Panc1 (cell line): ENCODE measurements at regions of chr2 and their contacts with region 1.

Region 1: DNA sequence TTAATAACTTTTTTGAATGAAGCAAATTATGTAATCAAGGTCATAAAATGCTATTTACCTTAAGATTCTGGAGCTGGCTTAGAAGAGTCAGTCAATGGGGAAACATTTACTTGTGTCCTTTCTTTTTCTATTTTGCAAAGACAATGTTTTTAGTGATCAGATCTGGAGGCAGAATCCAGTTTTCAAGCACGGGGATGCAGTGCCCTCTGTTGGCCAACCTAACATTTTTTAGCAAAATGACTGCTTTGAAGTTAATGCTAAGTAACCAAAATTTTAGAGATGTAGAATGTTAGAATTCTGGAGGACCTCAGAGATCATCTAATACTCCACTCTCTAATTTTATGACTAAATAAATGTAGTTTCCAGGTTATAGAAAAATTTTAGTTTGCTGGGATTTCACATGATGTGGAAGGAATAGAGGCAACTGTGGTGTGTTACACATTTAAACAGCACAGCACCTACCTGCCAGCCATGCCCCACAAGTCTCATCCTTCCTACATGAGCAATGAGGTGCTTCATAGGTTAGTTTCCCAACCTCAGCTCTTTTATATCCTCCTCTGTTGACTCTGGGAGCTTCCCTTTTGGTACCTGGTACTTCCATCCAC is 23.6 kb upstream of the SLC9A4 start:
- DNase-seq: peak; percentile 22
- ATAC-seq: no peak
- H3K4me3 ChIP-seq: no peak overlapping the region
- H3K27ac ChIP-seq: no peak overlapping the region
- H3K4me1 ChIP-seq: no peaks in the 10 kb centered on the region
- H3K27me3 ChIP-seq: peaks cover 2% of the 10 kb centered on the region; the same call in 1 of the 2 replicates
- CTCF ChIP-seq: peak; percentile 74

Region 2: DNA sequence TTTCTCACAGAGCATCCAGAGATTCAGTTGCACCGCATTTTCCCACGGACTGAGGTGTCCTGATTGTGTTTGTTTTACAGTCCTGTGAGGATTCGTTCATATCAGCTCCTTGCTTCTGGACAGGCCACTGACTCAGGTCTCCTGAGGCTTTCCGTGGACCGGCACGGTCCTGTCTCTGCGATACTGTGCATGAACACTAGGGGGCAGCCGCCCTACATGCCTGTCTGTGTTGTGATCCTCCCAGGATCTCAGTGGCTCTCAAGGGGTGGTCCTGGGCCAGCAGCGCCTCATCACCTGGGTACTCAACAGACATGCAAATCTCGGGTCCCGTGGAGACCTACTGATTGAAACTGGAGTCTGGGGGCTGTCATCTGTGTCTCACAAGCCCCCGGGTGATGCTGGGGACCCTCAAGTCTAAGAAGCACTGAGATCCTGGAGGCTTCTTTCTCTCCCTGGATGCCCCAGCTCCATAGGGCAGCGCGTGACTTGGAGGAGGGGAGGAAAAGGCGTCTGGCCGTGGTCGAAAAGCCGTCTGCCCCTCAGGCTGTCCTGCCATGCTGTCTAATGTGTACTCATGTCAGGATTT is 428.8 kb before region 1 on chr2:
- CTCF ChIA-PET with region 1: no interaction called
- POLR2A ChIA-PET with region 1: no interaction called
- in situ Hi-C with region 1: no loop called
- intact Hi-C with region 1: loop called (anchors 5 kb)
- DNase-seq: peak; percentile 64
- ATAC-seq: peak; percentile 98
- H3K4me3 ChIP-seq: no peak overlapping the region
- H3K27ac ChIP-seq: no peak overlapping the region
- H3K4me1 ChIP-seq: no peaks in the 10 kb centered on the region
- H3K27me3 ChIP-seq: peaks cover 2% of the 10 kb centered on the region; the same call in 1 of the 2 replicates
- CTCF ChIP-seq: peak; percentile 98

Region 3: DNA sequence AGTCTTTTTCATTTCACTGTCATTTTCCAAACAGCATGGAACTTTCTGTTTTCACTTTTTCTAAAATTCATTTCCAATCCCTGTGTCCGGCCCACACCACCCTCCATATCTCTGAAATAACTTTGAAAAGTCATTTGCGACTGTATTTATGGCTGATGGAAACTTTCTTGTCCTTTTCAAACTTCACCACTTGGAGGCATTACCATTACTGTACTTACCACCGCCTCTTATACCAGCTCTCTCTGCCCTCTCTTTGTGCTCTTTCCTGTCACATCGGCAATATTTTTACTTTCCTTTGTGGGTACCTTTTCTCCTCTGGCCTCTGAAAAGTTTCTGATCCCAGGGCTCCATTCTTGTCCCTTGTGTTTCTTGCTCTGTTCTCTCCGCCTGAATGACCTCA is 177.6 kb before region 1 on chr2:
- CTCF ChIA-PET with region 1: no interaction called
- POLR2A ChIA-PET with region 1: no interaction called
- in situ Hi-C with region 1: no loop called
- intact Hi-C with region 1: no loop called
- DNase-seq: no peak
- ATAC-seq: no peak
- H3K4me3 ChIP-seq: no peak overlapping the region
- H3K27ac ChIP-seq: no peak overlapping the region
- H3K4me1 ChIP-seq: no peaks in the 10 kb centered on the region
- H3K27me3 ChIP-seq: peaks cover 3% of the 10 kb centered on the region; the same call in 1 of the 2 replicates
- CTCF ChIP-seq: no peak

Region 4: GRCh38 chr2:102350137-102350793 is 99.2 kb before region 1 on chr2:
- CTCF ChIA-PET with region 1: no interaction called
- POLR2A ChIA-PET with region 1: no interaction called
- in situ Hi-C with region 1: no loop called
- intact Hi-C with region 1: no loop called
- DNase-seq: no peak
- ATAC-seq: no peak
- H3K4me3 ChIP-seq: no peak overlapping the region
- H3K27ac ChIP-seq: no peak overlapping the region
- H3K4me1 ChIP-seq: no peaks in the 10 kb centered on the region
- H3K27me3 ChIP-seq: peaks cover 15% of the 10 kb centered on the region
- CTCF ChIP-seq: no peak

Region 5: DNA sequence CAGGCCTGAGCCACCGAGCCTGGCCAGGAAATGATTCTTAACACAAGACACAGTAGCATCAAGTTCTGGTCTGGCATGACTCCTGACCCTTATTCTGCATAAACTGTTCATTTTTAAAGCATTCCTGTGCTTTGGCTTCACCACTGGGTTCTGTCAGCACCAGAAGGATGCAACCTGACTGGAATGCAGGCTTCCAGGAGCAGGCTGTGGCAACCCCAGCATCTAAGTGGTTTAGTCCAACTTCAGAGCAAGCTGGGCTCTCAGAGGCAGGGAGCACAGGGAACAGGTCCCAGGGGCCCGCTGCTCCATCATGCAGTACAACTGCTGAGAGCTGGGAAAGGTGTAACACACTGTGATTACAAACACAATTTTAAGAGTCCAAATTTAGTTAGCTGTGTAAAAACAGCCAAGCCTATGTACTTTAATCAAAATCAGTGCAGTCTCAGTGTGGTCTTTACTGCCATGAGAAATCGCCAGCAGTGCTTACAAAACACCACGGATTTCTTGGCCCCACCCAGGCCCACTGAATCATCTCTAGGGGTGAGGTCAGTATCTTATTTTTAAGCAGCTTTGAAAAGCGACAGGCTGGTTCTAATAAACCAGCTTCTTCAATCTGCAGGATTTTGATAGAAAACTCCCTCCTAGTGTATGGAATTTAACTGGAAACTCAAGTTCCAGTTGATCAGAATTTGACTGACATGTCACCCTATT is 268.0 kb after region 1 on chr2:
- CTCF ChIA-PET with region 1: no interaction called
- POLR2A ChIA-PET with region 1: no interaction called
- in situ Hi-C with region 1: no loop called
- intact Hi-C with region 1: no loop called
- DNase-seq: no peak
- ATAC-seq: no peak
- H3K4me3 ChIP-seq: no peak overlapping the region
- H3K27ac ChIP-seq: no peak overlapping the region
- H3K4me1 ChIP-seq: no peaks in the 10 kb centered on the region
- H3K27me3 ChIP-seq: no peaks in the 10 kb centered on the region
- CTCF ChIP-seq: no peak